ENCODE measurements at regions of chr1 and their contacts with region 1.

Region 1: GRCh38 chr1:177948336-177948972 is 21.4 kb downstream of the SEC16B start:
- DNase-seq: peak; percentile 62
- H3K4me3 ChIP-seq: no peak overlapping the region
- CTCF ChIP-seq: peak; percentile 96

Region 2: DNA sequence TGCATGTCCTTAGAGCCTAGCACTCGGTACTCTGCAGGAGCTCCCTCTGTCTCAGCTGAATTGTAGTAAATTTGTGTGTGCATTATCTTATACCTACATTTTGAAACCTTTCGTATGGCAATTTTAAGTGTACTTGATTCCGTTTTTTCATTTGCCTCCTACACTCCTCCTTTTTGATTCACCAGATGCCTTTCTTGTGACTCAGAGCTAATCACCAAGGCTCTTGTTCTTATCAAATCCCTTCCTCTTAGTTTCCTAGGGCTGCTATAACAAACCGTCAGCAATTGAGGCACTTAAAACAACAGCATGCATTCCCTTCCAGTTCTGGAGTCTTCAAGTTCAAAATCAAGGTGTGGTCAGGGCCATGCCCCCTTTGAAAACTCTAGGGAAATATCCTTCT is 1045.0 kb before region 1 on chr1:
- in situ Hi-C with region 1: loop called (anchors 25 kb)
- DNase-seq: no peak
- H3K4me3 ChIP-seq: no peak overlapping the region
- CTCF ChIP-seq: no peak

Region 3: GRCh38 chr1:177898003-177898654 is 50.3 kb before region 1 on chr1:
- in situ Hi-C with region 1: no loop called
- DNase-seq: no peak
- H3K4me3 ChIP-seq: no peak overlapping the region
- CTCF ChIP-seq: no peak

Region 4: GRCh38 chr1:177984136-177984525 is 35.7 kb after region 1 on chr1:
- in situ Hi-C with region 1: no loop called
- DNase-seq: peak; percentile 88
- H3K4me3 ChIP-seq: peak overlapping the region; percentile 24
- CTCF ChIP-seq: no peak